ENCODE measurements at regions of chr7 and their contacts with region 1.

Region 1: DNA sequence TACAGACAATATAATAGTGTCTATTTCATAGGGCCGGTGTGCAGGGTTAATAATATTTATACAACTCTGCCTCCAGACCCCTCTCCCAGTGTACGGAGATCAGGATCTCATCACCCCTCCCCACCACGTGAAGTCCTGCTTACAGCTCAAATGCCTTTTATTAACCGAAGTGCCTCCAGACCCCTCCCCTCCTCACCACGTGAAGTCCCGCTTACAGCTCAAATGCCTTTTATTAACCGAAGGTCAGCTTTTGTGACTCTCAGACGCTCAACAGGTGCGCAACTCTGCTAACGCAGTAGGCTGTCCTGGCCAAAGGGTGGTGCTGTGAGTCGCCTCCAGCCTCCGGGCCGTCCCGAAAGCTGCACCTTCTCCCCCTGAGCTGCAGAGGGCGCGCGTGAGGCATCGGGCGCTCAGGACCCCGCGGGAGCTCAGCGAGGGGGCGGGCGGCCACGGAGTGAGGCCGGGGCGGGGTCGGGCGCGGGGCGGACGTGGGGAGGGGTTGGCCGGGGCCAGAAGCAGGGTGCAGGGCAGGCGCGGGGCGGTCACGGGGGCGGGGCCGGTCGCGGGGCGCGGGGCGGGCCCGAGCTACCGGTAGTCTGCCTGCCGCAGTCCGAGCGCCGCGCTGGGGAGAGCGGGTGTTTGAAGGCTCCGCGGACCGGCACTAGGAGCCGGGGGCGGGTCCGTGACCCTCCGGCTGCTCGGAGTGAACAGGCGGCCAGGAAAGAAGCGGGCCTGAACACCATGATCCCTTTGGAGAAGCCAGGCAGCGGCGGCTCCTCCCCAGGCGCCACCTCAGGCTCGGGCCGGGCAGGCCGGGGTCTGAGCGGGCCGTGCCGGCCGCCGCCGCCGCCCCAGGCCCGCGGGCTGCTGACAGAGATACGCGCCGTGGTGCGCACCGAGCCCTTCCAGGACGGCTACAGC is at the start of gene STK17A:
- DNase-seq: peak; percentile 94
- H3K4me3 ChIP-seq: peak within 1 kb of the TSS; percentile 89
- H3K27ac ChIP-seq: peak within 1 kb of the TSS; percentile 88
- H3K4me1 ChIP-seq: peaks cover 30% of the 10 kb centered on the region
- H3K27me3 ChIP-seq: peaks cover 5% of the 10 kb centered on the region
- CTCF ChIP-seq: peak; percentile 99
- total RNA-seq, gene STK17A: 17.1 and 27.3 TPM in 2 replicates

Region 2: GRCh38 chr7:43621729-43622448 is 39.1 kb after region 1 on chr7:
- CTCF ChIA-PET with region 1: interaction called, 10 read pairs
- POLR2A ChIA-PET with region 1: no interaction called
- intact Hi-C with region 1: no loop called
- DNase-seq: peak; percentile 91
- H3K4me3 ChIP-seq: peak overlapping the region; percentile 3
- H3K27ac ChIP-seq: peak overlapping the region; percentile 86
- H3K4me1 ChIP-seq: peaks cover 79% of the 10 kb centered on the region
- H3K27me3 ChIP-seq: no peaks in the 10 kb centered on the region
- CTCF ChIP-seq: no peak

Region 3: GRCh38 chr7:43700059-43700501 is 117.3 kb after region 1 on chr7:
- CTCF ChIA-PET with region 1: interaction called, 141 read pairs
- POLR2A ChIA-PET with region 1: interaction called, 7 read pairs
- intact Hi-C with region 1: loop called (anchors 1 kb)
- DNase-seq: peak; percentile 78
- H3K4me3 ChIP-seq: no peak overlapping the region
- H3K27ac ChIP-seq: no peak overlapping the region
- H3K4me1 ChIP-seq: peaks cover 25% of the 10 kb centered on the region
- H3K27me3 ChIP-seq: no peaks in the 10 kb centered on the region
- CTCF ChIP-seq: peak; percentile 74

Region 4: DNA sequence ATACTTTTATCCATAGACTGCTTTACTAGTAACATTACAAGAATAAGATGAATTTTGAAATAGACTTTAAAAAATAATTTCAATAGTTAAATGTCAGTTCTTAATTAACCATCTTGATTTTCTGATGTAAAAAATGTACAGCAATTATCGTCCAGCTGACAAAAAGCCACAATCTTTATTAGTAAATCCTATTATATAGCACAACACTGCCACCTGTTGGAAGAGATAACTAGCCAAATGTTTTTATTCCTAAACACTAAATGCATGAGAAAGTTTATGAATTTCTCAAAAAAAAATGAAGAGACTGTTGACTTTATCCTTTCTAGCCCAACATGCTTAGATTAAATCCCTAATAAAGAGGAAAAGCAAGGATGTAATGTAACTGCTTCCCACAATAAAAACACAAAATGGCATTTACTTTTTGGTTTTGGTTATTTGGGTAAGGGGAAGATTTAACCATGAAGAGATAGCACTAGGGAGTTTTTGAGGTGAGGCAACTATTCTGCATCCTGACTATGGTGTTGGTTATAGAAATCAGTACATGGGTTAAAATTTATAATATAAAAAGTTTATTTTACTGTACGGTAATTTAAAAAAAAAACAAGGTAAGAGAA is 138.5 kb after region 1 on chr7:
- CTCF ChIA-PET with region 1: interaction called, 14 read pairs
- POLR2A ChIA-PET with region 1: no interaction called
- intact Hi-C with region 1: loop called (anchors 1 kb)
- DNase-seq: peak; percentile 68
- H3K4me3 ChIP-seq: no peak overlapping the region
- H3K27ac ChIP-seq: no peak overlapping the region
- H3K4me1 ChIP-seq: peaks cover 7% of the 10 kb centered on the region
- H3K27me3 ChIP-seq: no peaks in the 10 kb centered on the region
- CTCF ChIP-seq: peak; percentile 78

Region 5: GRCh38 chr7:43808135-43808809 is 225.5 kb after region 1 on chr7:
- CTCF ChIA-PET with region 1: interaction called, 17 read pairs
- POLR2A ChIA-PET with region 1: interaction called, 4 read pairs
- intact Hi-C with region 1: no loop called
- DNase-seq: no peak
- H3K4me3 ChIP-seq: no peak overlapping the region
- H3K27ac ChIP-seq: no peak overlapping the region
- H3K4me1 ChIP-seq: no peaks in the 10 kb centered on the region
- H3K27me3 ChIP-seq: no peaks in the 10 kb centered on the region
- CTCF ChIP-seq: no peak

Region 6: DNA sequence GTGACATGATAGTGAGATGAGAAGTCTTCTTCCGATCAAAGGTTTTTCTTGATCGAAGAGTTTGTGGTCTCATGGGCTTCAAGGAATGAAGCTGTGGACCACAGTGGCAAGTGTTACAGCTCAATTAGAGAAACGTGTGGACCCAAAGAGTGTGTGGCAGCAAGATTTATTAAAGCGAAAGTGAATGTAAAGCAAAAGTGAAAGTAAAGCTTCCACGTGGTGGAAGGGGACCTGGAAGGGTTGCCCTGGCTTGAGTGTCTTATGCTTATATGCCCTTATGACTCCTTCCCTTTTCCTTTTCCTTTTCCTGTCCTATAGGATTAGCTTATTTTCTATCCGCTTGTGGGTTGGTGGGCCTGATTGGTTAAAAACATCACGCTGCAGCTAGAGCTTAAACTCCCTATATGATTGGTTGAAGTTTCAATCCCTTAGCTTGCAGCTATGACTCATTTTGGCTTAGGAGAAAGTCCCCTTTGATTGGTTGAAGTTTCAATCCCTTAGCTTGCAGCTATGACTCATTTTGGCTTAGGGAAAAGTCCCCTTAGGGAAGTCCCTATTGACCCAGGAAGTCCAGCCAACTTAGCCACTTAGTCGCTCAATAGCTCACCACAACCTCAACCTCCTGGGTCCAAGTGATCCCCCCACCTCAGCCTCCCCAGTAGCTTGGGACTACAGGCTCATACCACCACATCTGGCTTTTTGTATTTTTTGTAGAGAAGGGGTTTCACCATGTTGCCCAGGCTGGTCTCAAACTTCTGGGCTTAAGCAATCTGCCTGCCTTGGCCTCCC is 251.9 kb after region 1 on chr7:
- CTCF ChIA-PET with region 1: interaction called, 9 read pairs
- POLR2A ChIA-PET with region 1: no interaction called
- intact Hi-C with region 1: loop called (anchors 2 kb)
- DNase-seq: peak; percentile 19
- H3K4me3 ChIP-seq: peak overlapping the region; percentile 30
- H3K27ac ChIP-seq: no peak overlapping the region
- H3K4me1 ChIP-seq: no peaks in the 10 kb centered on the region
- H3K27me3 ChIP-seq: no peaks in the 10 kb centered on the region
- CTCF ChIP-seq: no peak

Measured in A673 (cell line).